B cell (primary cell): ENCODE measurements at regions of chr17 and their contacts with region 1.

Region 1: DNA sequence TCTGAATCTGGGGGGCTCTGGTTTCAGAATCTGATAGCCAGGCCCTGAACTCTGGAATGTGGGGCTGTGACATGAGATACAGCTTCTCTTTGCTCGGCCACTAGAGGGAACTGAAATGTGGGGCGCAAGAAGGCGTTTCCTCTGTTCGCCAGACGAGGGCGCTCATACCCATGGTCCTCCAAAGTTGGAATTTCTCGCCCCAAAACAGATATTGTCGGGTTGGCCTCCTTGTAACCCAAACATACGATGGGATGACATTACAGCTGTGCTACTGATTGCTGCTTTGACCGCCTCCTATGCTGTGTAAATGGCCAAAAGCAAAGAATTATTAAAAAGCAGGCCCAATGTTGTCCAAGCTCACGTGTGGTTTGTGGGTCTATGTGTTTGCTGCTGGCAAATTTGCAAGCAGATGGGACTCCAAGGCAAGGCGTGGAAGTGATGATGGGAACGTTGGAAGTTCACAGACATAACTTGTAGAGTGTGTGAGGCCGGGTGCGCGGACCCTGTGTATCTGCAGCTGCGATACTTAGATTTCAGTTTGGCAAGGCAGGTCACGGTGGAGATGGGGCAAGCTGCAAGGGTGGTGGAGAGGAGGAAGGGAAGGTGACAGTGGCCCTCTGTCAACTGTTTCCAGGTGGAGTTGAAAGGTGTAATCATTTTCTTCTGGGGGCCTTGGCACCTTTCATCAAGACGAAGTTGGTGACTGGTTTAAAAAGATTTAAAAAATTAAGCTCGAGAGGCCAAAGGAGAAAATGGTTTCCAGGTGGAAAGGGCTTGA is 13.0 kb upstream of the MSI2 start:
- DNase-seq: peak; percentile 84
- ATAC-seq: peak; percentile 95
- H3K4me3 ChIP-seq: no peak overlapping the region
- H3K4me3 Mint-ChIP-seq: no peak overlapping the region
- H3K27ac ChIP-seq: no peak overlapping the region
- H3K27ac Mint-ChIP-seq: no peak overlapping the region
- H3K4me1 ChIP-seq: peaks cover 0 to 3% of the 10 kb centered on the region in 2 donors
- H3K4me1 Mint-ChIP-seq: no peaks in the 10 kb centered on the region
- H3K27me3 ChIP-seq: peaks cover 0 to 9% (median 4%) of the 10 kb centered on the region in 4 experiments
- H3K27me3 Mint-ChIP-seq: peaks cover 3% of the 10 kb centered on the region
- CTCF ChIP-seq: peak; percentile 100

Region 2: DNA sequence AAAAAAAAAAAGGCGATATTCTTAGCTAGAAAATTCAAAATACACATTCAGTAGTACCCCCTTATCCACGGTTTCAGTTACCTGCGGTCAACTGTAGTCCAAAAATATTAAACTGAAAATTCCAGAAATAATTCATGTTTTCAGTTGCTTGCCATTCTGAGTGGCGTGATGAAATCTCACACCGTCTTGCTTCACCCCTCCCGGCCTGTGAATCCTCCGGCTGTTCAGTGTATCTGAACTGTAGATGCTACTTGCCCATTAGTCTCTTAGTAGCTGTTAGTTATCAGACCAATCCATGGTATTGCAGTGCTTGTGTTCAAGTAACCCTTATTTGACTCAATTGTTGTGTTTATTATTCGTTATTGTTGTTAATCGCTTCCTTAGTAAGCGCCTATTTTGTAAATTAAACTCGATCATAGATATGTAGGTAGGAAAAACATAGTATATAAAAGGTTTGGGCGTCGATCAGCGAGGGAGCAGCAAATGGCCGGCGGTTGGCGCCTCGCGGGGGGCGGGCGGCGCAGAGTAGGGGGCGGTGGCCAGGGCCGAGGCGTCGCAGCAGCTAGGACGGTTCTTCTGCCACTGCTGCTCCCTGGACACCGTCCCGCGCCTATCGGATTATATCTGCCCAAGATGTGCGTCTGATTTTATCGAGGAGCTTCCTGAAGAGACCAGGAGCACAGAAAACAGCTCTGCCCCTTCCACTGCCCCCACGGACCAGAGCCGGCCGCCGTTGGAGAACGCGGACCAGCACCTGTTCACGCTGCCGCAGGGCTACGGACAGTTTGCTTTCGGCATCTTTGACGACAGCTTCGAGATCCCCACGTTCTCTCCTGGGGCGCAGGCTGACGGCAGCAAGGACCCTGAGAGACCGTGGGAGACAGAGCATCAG is 198.1 kb before region 1 on chr17:
- CTCF ChIA-PET with region 1: no interaction called
- POLR2A ChIA-PET with region 1: no interaction called
- intact Hi-C with region 1: no loop called
- DNase-seq: peak; percentile 17
- ATAC-seq: no peak
- H3K4me3 ChIP-seq: peak overlapping the region in 4 of 5 experiments; percentile 46 to 69 (median 52)
- H3K4me3 Mint-ChIP-seq: peak overlapping the region; percentile 85
- H3K27ac ChIP-seq: no peak overlapping the region
- H3K27ac Mint-ChIP-seq: no peak overlapping the region
- H3K4me1 ChIP-seq: peaks cover 24 to 26% of the 10 kb centered on the region in 2 donors
- H3K4me1 Mint-ChIP-seq: peaks cover 18% of the 10 kb centered on the region
- H3K27me3 ChIP-seq: peaks cover 0 to 32% (median 20%) of the 10 kb centered on the region in 4 experiments
- H3K27me3 Mint-ChIP-seq: peaks cover 35% of the 10 kb centered on the region
- CTCF ChIP-seq: no peak

Region 3: DNA sequence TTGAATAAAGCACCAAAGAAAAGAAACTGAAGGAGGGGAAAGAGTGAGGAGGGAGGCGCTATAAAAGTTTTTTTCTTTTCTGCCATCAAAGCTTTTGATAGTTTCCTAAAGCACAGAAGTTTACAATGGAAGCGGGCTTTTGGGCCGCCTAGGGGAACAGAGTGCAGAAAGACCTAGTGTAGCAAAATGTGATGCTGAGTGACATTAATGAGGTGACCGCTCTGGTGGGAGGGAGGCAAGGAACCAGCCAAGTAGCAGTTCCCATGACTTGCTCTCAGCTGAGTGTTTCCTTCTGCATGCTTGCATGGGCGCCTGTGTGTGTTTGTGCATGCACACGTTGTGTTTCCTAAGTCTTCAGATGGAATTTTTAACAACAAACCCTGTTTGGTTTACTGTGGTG is 28.5 kb after region 1 on chr17:
- CTCF ChIA-PET with region 1: interaction called, 16 read pairs
- POLR2A ChIA-PET with region 1: no interaction called
- intact Hi-C with region 1: no loop called
- DNase-seq: no peak
- ATAC-seq: no peak
- H3K4me3 ChIP-seq: no peak overlapping the region
- H3K4me3 Mint-ChIP-seq: no peak overlapping the region
- H3K27ac ChIP-seq: no peak overlapping the region
- H3K27ac Mint-ChIP-seq: no peak overlapping the region
- H3K4me1 ChIP-seq: no peaks in the 10 kb centered on the region
- H3K4me1 Mint-ChIP-seq: peaks cover 5% of the 10 kb centered on the region
- H3K27me3 ChIP-seq: no peaks in the 10 kb centered on the region
- H3K27me3 Mint-ChIP-seq: no peaks in the 10 kb centered on the region
- CTCF ChIP-seq: no peak

Region 4: DNA sequence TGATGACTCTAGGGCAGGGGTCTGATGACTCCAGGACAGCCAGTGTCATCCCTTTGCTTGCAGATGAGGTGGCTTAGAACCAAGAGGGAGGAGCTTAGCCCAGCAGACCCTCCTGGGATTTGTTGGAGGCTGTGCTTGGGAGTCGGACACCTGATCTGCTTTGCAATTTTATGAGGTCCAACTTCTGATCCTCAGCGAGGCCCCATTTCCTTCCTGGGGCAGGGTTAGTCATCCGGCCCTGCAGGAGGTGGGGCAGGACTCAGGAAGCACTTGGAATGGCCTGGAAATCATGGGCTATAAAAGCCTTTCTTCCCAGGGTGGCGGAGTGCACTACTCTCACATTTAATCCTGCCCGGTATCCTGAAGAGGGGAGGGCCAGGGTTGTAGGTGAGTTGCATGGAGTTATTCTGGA is 181.4 kb after region 1 on chr17:
- CTCF ChIA-PET with region 1: interaction called, 10 read pairs
- POLR2A ChIA-PET with region 1: no interaction called
- intact Hi-C with region 1: no loop called
- DNase-seq: no peak
- ATAC-seq: no peak
- H3K4me3 ChIP-seq: no peak overlapping the region
- H3K4me3 Mint-ChIP-seq: no peak overlapping the region
- H3K27ac ChIP-seq: no peak overlapping the region
- H3K27ac Mint-ChIP-seq: no peak overlapping the region
- H3K4me1 ChIP-seq: peaks cover 10 to 12% of the 10 kb centered on the region in 2 donors
- H3K4me1 Mint-ChIP-seq: peaks cover 36% of the 10 kb centered on the region
- H3K27me3 ChIP-seq: no peaks in the 10 kb centered on the region
- H3K27me3 Mint-ChIP-seq: no peaks in the 10 kb centered on the region
- CTCF ChIP-seq: no peak

Region 5: GRCh38 chr17:57494443-57494842 is 251.1 kb after region 1 on chr17:
- CTCF ChIA-PET with region 1: no interaction called
- POLR2A ChIA-PET with region 1: no interaction called
- intact Hi-C with region 1: no loop called
- DNase-seq: no peak
- ATAC-seq: no peak
- H3K4me3 ChIP-seq: no peak overlapping the region
- H3K4me3 Mint-ChIP-seq: no peak overlapping the region
- H3K27ac ChIP-seq: no peak overlapping the region
- H3K27ac Mint-ChIP-seq: no peak overlapping the region
- H3K4me1 ChIP-seq: peaks cover 27 to 34% of the 10 kb centered on the region in 2 donors
- H3K4me1 Mint-ChIP-seq: peaks cover 56% of the 10 kb centered on the region
- H3K27me3 ChIP-seq: no peaks in the 10 kb centered on the region
- H3K27me3 Mint-ChIP-seq: no peaks in the 10 kb centered on the region
- CTCF ChIP-seq: no peak

Region 6: DNA sequence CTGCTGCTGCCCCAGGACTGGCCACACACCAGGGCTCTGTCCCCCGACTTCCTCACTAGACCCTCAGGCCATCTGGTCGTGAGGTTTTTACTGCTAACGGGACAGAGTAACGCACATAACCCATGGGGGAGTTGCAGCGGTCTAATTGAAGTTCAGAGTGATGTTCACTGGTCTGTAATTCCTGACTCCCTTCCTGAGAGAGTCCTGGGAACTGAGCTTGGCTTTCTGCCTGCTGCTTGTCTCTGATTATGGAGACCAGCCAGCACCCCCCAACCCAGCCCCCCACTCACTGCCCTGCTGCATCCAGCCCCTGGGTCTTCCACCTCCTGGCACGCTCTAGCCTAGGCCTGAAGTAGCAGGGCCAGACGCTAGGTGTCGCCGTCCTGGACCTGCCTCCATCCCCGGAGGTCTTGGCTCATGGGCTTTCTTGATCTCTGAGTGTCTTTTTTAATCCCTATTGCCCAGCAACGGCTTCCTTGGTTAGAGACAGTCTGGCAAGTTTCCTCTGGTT is 308.8 kb after region 1 on chr17:
- CTCF ChIA-PET with region 1: interaction called, 26 read pairs
- POLR2A ChIA-PET with region 1: no interaction called
- intact Hi-C with region 1: no loop called
- DNase-seq: peak; percentile 81
- ATAC-seq: peak; percentile 31
- H3K4me3 ChIP-seq: peak overlapping the region in 4 of 5 experiments; percentile 32 to 55 (median 48)
- H3K4me3 Mint-ChIP-seq: peak overlapping the region; percentile 81
- H3K27ac ChIP-seq: peak overlapping the region; percentile 96 to 97
- H3K27ac Mint-ChIP-seq: peak overlapping the region; percentile 87
- H3K4me1 ChIP-seq: peaks cover 94 to 100% of the 10 kb centered on the region in 2 donors
- H3K4me1 Mint-ChIP-seq: peaks cover 98% of the 10 kb centered on the region
- H3K27me3 ChIP-seq: no peaks in the 10 kb centered on the region
- H3K27me3 Mint-ChIP-seq: no peaks in the 10 kb centered on the region
- CTCF ChIP-seq: peak; percentile 77

Region 7: GRCh38 chr17:57671667-57672632 is 428.6 kb after region 1 on chr17:
- CTCF ChIA-PET with region 1: interaction called, 137 read pairs
- POLR2A ChIA-PET with region 1: no interaction called
- intact Hi-C with region 1: loop called (anchors 1 kb)
- DNase-seq: peak; percentile 81
- ATAC-seq: peak; percentile 97
- H3K4me3 ChIP-seq: no peak overlapping the region
- H3K4me3 Mint-ChIP-seq: no peak overlapping the region
- H3K27ac ChIP-seq: no peak overlapping the region
- H3K27ac Mint-ChIP-seq: no peak overlapping the region
- H3K4me1 ChIP-seq: peaks cover 1 to 7% of the 10 kb centered on the region in 2 donors
- H3K4me1 Mint-ChIP-seq: peaks cover 9% of the 10 kb centered on the region
- H3K27me3 ChIP-seq: no peaks in the 10 kb centered on the region
- H3K27me3 Mint-ChIP-seq: no peaks in the 10 kb centered on the region
- CTCF ChIP-seq: peak; percentile 95

Region 8: DNA sequence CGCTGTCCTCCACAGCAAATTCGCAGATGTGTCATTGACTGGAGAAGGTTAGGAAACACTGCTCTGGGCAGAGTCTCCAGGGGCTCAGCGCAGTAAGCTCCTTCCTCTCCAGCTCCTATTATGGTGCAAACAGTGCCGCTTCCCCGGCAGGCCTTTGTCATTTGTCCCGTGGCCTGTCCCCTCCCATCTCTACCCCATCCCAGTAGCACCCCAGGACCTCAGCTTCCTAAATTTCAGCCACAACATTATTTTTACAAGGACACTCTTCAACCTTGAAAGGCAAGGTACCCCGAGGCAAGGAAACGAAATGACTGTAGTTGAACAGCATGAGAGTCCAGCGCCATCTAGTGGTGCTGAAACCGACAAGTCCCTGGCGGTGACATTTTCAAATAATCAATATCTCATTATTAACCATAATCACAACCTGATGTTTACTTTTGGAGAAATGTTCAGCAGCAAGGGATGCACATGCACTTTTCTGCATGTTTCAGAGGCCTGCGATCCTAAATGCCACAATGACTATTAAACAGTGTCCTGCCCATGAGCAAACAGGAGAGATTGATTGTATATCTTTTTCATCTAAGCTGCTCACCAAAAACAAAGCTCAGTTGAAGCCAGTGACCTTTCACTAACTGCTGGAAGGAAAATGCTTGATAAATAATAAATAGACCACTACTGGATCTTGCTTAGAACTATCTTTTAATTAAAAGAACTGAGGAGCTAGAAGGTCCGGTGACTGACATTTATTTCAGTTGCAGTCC is 590.0 kb after region 1 on chr17:
- CTCF ChIA-PET with region 1: interaction called, 48 read pairs
- POLR2A ChIA-PET with region 1: no interaction called
- intact Hi-C with region 1: no loop called
- DNase-seq: peak; percentile 81
- ATAC-seq: peak; percentile 62
- H3K4me3 ChIP-seq: peak overlapping the region; percentile 36 to 83 (median 58)
- H3K4me3 Mint-ChIP-seq: no peak overlapping the region
- H3K27ac ChIP-seq: no peak overlapping the region
- H3K27ac Mint-ChIP-seq: no peak overlapping the region
- H3K4me1 ChIP-seq: peaks cover 8 to 12% of the 10 kb centered on the region in 2 donors
- H3K4me1 Mint-ChIP-seq: peaks cover 2% of the 10 kb centered on the region
- H3K27me3 ChIP-seq: no peaks in the 10 kb centered on the region
- H3K27me3 Mint-ChIP-seq: no peaks in the 10 kb centered on the region
- CTCF ChIP-seq: peak; percentile 96